GM12878 (cell line): ENCODE measurements at regions of chr15 and their contacts with region 1.

Region 1: DNA sequence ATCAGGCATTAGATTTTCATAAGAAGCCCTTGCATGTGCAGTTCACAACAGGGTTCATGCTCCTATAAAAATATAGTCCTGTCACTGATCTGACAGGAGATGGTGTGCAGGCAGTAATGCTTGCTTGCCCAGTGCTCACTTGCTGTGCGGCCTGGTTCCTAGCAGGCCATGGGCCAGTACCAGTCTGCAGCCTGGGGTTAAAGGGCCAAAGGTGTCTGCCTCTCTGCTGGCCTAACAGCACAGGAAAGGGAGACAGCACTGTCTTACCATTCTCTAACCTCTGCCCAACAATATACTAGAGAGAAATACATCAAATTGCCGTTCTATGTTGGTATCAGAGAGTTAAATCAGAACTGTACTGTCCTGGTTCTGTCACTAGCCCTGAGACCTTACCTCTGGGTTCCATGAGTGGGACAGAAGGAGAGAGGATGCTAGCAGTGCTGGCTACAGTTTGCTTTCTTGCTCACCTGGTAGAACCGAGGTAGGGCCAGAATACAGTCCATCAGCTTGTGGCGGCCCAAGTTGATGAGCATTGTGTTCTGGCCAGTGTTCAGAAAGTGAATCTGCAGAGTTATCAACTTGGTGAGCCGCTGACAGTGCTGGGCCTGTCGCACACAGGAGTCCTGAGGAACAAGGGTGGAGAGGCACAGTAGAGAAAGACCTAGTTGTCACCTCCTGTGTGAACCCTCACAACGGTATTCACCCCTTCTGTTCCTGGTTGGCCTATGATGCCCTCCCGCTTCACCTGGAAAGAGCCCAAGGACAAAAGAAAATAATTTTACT is 28.6 kb downstream of the EIF3J start:
- DNase-seq: no peak
- ATAC-seq: no peak
- H3K4me3 ChIP-seq: no peak overlapping the region
- H3K27ac ChIP-seq: no peak overlapping the region
- H3K4me1 ChIP-seq: no peaks in the 10 kb centered on the region
- H3K27me3 ChIP-seq: no peaks in the 10 kb centered on the region
- CTCF ChIP-seq: no peak
- EP300 ChIP-seq: no peak
- POLR2A ChIP-seq: 0 out of 2 replicates have a peak, but pooled peaks have one; percentile 58
- RAD21 ChIP-seq: no peak

Region 2: GRCh38 chr15:44545913-44546802 is 19.4 kb before region 1 on chr15:
- CTCF ChIA-PET with region 1: interaction called, 4 read pairs
- POLR2A ChIA-PET with region 1: interaction called, 10 read pairs
- RAD21 ChIA-PET with region 1: no interaction called
- SMC1A ChIA-PET with region 1: interaction called, 4 read pairs
- in situ Hi-C with region 1: no loop called
- intact Hi-C with region 1: no loop called
- DNase-seq: peak; percentile 41
- ATAC-seq: peak; percentile 89
- H3K4me3 ChIP-seq: peak overlapping the region; percentile 23; the same call in 1 of the 2 replicates
- H3K27ac ChIP-seq: peak overlapping the region; percentile 70
- H3K4me1 ChIP-seq: peaks cover 7% of the 10 kb centered on the region
- H3K27me3 ChIP-seq: no peaks in the 10 kb centered on the region
- CTCF ChIP-seq: peak; percentile 37 to 47 (median 42); a peak in 5 of 6 replicates
- EP300 ChIP-seq: no peak
- POLR2A ChIP-seq: no peak
- RAD21 ChIP-seq: no peak

Region 3: GRCh38 chr15:44598892-44599291 is 33.3 kb after region 1 on chr15:
- CTCF ChIA-PET with region 1: no interaction called
- POLR2A ChIA-PET with region 1: no interaction called
- RAD21 ChIA-PET with region 1: no interaction called
- SMC1A ChIA-PET with region 1: no interaction called
- in situ Hi-C with region 1: no loop called
- intact Hi-C with region 1: no loop called
- DNase-seq: no peak
- ATAC-seq: no peak
- H3K4me3 ChIP-seq: no peak overlapping the region
- H3K27ac ChIP-seq: no peak overlapping the region
- H3K4me1 ChIP-seq: peaks cover 7% of the 10 kb centered on the region; the same call in 1 of the 2 replicates
- H3K27me3 ChIP-seq: no peaks in the 10 kb centered on the region
- CTCF ChIP-seq: no peak
- EP300 ChIP-seq: no peak
- POLR2A ChIP-seq: no peak
- RAD21 ChIP-seq: no peak